ENCODE measurements at regions of chr20 and their contacts with region 1.

Region 1: GRCh38 chr20:19974626-19975435 is 42.3 kb upstream of the NAA20 start:
- DNase-seq: peak; percentile 95
- H3K4me3 Mint-ChIP-seq: peak overlapping the region; percentile 80
- H3K27ac Mint-ChIP-seq: peak overlapping the region; percentile 83
- H3K4me1 Mint-ChIP-seq: peaks cover 36% of the 10 kb centered on the region
- H3K27me3 Mint-ChIP-seq: no peaks in the 10 kb centered on the region
- CTCF ChIP-seq: no peak

Region 2: GRCh38 chr20:19692685-19693119 is 282.1 kb before region 1 on chr20:
- CTCF ChIA-PET with region 1: interaction called, 32 read pairs
- POLR2A ChIA-PET with region 1: interaction called, 7 read pairs
- intact Hi-C with region 1: loop called (anchors 5 kb)
- DNase-seq: peak; percentile 58
- H3K4me3 Mint-ChIP-seq: no peak overlapping the region
- H3K27ac Mint-ChIP-seq: peak overlapping the region; percentile 39
- H3K4me1 Mint-ChIP-seq: peaks cover 23% of the 10 kb centered on the region
- H3K27me3 Mint-ChIP-seq: no peaks in the 10 kb centered on the region
- CTCF ChIP-seq: peak; percentile 92

Region 3: GRCh38 chr20:19802492-19803158 is 172.2 kb before region 1 on chr20:
- CTCF ChIA-PET with region 1: interaction called, 7 read pairs
- POLR2A ChIA-PET with region 1: interaction called, 16 read pairs
- intact Hi-C with region 1: no loop called
- DNase-seq: peak; percentile 72
- H3K4me3 Mint-ChIP-seq: no peak overlapping the region
- H3K27ac Mint-ChIP-seq: peak overlapping the region; percentile 9
- H3K4me1 Mint-ChIP-seq: peaks cover 18% of the 10 kb centered on the region
- H3K27me3 Mint-ChIP-seq: no peaks in the 10 kb centered on the region
- CTCF ChIP-seq: peak; percentile 21

Region 4: DNA sequence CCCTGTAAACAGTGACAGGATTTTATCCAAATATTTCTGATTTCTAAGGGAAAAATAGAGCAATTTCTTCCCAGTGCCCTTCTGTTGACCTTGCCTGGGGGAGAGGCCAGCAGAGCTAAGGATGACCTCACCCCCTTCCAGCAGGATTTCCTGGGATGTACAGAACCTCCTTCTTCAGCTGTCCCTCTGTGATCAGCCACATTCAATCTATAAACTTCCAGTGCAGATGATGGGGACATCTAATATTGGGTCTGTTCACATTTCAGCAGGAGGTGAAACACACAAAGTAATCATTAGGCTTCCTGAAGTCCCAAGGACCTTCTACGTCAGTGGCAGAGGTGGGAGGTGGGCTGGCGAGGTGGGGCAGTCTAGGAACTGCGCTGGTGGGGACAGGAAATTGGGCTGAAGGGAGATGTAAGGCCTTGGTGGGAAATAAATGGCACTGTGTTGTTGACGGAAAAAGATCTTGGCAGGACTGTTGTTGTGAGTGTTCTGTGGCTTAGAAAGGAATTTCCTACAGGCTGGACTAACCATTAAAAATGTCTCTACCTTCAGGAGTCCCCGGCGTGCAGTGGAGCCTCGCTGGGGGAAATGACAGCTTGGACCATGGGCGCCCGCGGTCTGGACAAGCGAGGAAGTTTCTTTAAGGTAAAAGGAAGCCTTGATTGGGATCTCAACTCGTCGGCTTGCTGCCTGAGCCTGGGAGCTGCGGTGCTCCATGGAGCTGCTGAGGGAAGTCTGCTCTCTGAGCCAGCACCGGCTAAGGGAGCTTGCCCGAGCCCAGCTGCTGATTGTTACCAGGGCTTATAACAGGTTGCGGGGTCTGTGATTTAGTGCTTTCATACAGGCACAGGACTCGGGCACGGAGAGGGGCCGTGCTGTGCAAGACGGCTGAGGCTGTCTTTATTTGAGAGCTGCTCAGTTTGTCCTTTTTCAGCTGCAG is 85.5 kb before region 1 on chr20:
- CTCF ChIA-PET with region 1: interaction called, 58 read pairs
- POLR2A ChIA-PET with region 1: interaction called, 201 read pairs
- intact Hi-C with region 1: loop called (anchors 2 kb)
- DNase-seq: peak; percentile 48
- H3K4me3 Mint-ChIP-seq: peak overlapping the region; percentile 60
- H3K27ac Mint-ChIP-seq: peak overlapping the region; percentile 94
- H3K4me1 Mint-ChIP-seq: peaks cover 48% of the 10 kb centered on the region
- H3K27me3 Mint-ChIP-seq: no peaks in the 10 kb centered on the region
- CTCF ChIP-seq: no peak

Region 5: DNA sequence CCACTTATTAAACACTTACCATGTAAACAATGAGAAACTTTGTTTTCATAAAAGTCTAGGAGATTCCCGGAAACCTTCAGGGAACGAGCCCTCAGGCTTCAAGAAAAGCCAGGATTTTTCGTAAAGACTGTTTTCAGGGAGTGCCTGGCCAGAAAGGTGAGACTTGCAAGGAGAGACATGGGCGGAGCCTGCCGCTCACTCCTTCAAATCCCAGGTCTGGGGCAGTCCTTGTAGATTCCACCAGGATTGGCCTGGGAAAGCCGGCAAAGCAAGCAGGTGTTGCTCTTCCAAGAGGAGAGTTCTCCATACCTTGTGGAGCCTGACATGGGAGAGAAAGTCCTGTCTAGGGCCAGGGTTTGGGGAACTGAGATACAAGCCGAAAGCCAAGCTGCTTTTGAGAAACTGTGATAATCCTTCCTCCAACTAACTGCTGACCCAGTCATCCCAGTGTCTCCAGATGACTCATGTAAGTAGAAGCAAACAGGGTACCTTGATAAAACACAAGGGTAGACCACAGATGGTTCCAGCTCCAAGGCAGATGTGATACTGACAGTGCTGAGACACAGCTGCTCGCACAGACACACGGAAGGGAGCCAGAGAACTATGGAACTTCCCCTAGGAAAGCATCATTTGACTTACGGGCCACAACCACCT is 27.1 kb before region 1 on chr20:
- CTCF ChIA-PET with region 1: interaction called, 3 read pairs
- POLR2A ChIA-PET with region 1: interaction called, 11 read pairs
- intact Hi-C with region 1: no loop called
- DNase-seq: peak; percentile 49
- H3K4me3 Mint-ChIP-seq: no peak overlapping the region
- H3K27ac Mint-ChIP-seq: no peak overlapping the region
- H3K4me1 Mint-ChIP-seq: no peaks in the 10 kb centered on the region
- H3K27me3 Mint-ChIP-seq: no peaks in the 10 kb centered on the region
- CTCF ChIP-seq: no peak

Region 6: GRCh38 chr20:19995220-19995863 is 20.5 kb after region 1 on chr20:
- CTCF ChIA-PET with region 1: interaction called, 258 read pairs
- POLR2A ChIA-PET with region 1: interaction called, 525 read pairs
- intact Hi-C with region 1: loop called (anchors 1 kb)
- DNase-seq: peak; percentile 70
- H3K4me3 Mint-ChIP-seq: no peak overlapping the region
- H3K27ac Mint-ChIP-seq: peak overlapping the region; percentile 86
- H3K4me1 Mint-ChIP-seq: peaks cover 28% of the 10 kb centered on the region
- H3K27me3 Mint-ChIP-seq: no peaks in the 10 kb centered on the region
- CTCF ChIP-seq: peak; percentile 78

Region 7: DNA sequence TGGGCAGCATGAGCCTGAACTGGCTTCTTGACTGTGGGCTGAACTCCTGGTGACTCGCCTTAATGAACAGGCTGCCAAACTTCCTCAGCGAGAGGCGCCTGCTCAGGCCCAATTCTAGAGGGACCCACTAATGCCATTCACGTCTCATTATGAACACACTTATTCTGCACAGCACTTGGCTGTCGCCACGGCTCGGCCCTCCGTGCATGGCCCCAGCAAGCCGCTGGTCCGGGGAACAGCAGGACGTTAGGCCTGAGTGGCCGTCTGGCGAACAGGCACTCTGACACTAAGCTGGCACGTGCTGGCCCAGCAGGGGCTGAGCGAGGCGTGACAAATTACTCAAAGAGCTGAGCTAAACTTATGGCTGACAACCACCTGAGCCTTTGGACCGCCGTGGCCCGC is 439.0 kb after region 1 on chr20:
- CTCF ChIA-PET with region 1: no interaction called
- POLR2A ChIA-PET with region 1: no interaction called
- intact Hi-C with region 1: no loop called
- DNase-seq: no peak
- H3K4me3 Mint-ChIP-seq: no peak overlapping the region
- H3K27ac Mint-ChIP-seq: no peak overlapping the region
- H3K4me1 Mint-ChIP-seq: no peaks in the 10 kb centered on the region
- H3K27me3 Mint-ChIP-seq: no peaks in the 10 kb centered on the region
- CTCF ChIP-seq: no peak

Measured in MCF 10A (cell line).